H1 (cell line): ENCODE measurements at regions of chr1 and their contacts with region 1.

Region 1: GRCh38 chr1:206865013-206865671 is at the start of gene IL20:
- DNase-seq: peak; percentile 43 to 96
- H3K4me3 ChIP-seq: no peak within 1 kb of the TSS
- H3K27ac ChIP-seq: no peak within 1 kb of the TSS
- H3K4me1 ChIP-seq: no peaks in the 10 kb centered on the region
- H3K27me3 ChIP-seq: peaks cover 0 to 2% (median 0%) of the 10 kb centered on the region in 4 experiments; a peak in 1 of 7 replicates
- CTCF ChIP-seq: peak; percentile 93 to 99 (median 97)
- EP300 ChIP-seq: no peak
- POLR2A ChIP-seq: no peak
- RAD21 ChIP-seq: peak; percentile 61 to 74
- total RNA-seq, gene IL20: not detected in 2 replicates

Region 2: DNA sequence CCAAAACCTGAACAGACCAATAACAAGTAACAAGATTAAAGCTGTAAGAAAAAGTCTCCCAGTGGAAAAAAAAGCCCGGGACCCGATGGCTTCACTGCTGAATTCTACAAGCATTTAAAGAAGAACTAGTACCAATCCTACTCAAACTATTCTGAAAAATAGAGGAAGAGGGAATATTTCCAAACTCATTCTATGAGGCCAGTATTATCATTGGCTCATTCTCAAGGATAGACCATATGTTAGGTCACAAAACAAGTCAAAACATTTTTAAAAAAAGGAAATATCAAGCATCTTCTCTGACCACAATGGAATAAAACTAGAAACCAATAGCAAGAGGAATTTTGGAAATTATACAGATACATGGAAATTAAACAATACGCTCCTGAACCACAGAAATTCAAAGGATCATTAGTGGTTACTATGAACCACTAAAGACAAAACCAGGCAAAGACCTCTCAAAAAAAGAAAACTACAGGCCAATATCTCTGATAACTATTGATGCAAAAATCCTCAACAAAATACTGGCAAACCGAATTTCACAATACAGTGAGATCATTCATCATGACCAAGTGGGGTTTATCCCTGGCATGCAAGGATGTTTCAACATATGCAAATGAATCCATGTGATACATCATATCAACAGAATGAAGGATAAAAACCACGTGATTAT is 13.7 kb before region 1 on chr1:
- CTCF ChIA-PET with region 1: interaction called, 49 read pairs
- POLR2A ChIA-PET with region 1: no interaction called
- DNase-seq: no peak
- H3K4me3 ChIP-seq: no peak overlapping the region
- H3K27ac ChIP-seq: no peak overlapping the region
- H3K4me1 ChIP-seq: no peaks in the 10 kb centered on the region
- H3K27me3 ChIP-seq: no peaks in the 10 kb centered on the region
- CTCF ChIP-seq: no peak
- EP300 ChIP-seq: no peak
- POLR2A ChIP-seq: no peak
- RAD21 ChIP-seq: no peak

Region 3: GRCh38 chr1:206878456-206878855 is 13.3 kb after region 1 on chr1:
- CTCF ChIA-PET with region 1: interaction called, 14 read pairs
- POLR2A ChIA-PET with region 1: interaction called, 3 read pairs
- DNase-seq: no peak
- H3K4me3 ChIP-seq: no peak overlapping the region
- H3K27ac ChIP-seq: no peak overlapping the region
- H3K4me1 ChIP-seq: no peaks in the 10 kb centered on the region
- H3K27me3 ChIP-seq: no peaks in the 10 kb centered on the region
- CTCF ChIP-seq: peak in 1 of 3 experiments; percentile 30; a peak in 1 of 4 replicates
- EP300 ChIP-seq: no peak
- POLR2A ChIP-seq: no peak
- RAD21 ChIP-seq: no peak

Region 4: GRCh38 chr1:207115269-207115668 is 250.1 kb after region 1 on chr1:
- CTCF ChIA-PET with region 1: no interaction called
- POLR2A ChIA-PET with region 1: no interaction called
- DNase-seq: no peak
- H3K4me3 ChIP-seq: no peak overlapping the region
- H3K27ac ChIP-seq: no peak overlapping the region
- H3K4me1 ChIP-seq: no peaks in the 10 kb centered on the region
- H3K27me3 ChIP-seq: no peaks in the 10 kb centered on the region
- CTCF ChIP-seq: no peak
- EP300 ChIP-seq: no peak
- POLR2A ChIP-seq: no peak
- RAD21 ChIP-seq: no peak